ENCODE measurements at regions of chr19 and their contacts with region 1.

Region 1: GRCh38 chr19:52922841-52923777 is at the start of gene ZNF888:
- DNase-seq: peak; percentile 84 to 88
- ATAC-seq: peak; percentile 100
- H3K4me3 ChIP-seq: peak within 1 kb of the TSS; percentile 76
- H3K4me3 Mint-ChIP-seq: peak within 1 kb of the TSS; percentile 89
- H3K27ac ChIP-seq: peak within 1 kb of the TSS; percentile 69
- H3K27ac Mint-ChIP-seq: peak within 1 kb of the TSS; percentile 57 to 80
- H3K4me1 ChIP-seq: peaks cover 19% of the 10 kb centered on the region
- H3K4me1 Mint-ChIP-seq: peaks cover 16 to 29% of the 10 kb centered on the region in 2 donors
- H3K27me3 ChIP-seq: no peaks in the 10 kb centered on the region
- H3K27me3 Mint-ChIP-seq: no peaks in the 10 kb centered on the region
- CTCF ChIP-seq: no peak
- total RNA-seq, gene ZNF888: 5.1 to 13.5 (median 8.0) TPM

Region 2: DNA sequence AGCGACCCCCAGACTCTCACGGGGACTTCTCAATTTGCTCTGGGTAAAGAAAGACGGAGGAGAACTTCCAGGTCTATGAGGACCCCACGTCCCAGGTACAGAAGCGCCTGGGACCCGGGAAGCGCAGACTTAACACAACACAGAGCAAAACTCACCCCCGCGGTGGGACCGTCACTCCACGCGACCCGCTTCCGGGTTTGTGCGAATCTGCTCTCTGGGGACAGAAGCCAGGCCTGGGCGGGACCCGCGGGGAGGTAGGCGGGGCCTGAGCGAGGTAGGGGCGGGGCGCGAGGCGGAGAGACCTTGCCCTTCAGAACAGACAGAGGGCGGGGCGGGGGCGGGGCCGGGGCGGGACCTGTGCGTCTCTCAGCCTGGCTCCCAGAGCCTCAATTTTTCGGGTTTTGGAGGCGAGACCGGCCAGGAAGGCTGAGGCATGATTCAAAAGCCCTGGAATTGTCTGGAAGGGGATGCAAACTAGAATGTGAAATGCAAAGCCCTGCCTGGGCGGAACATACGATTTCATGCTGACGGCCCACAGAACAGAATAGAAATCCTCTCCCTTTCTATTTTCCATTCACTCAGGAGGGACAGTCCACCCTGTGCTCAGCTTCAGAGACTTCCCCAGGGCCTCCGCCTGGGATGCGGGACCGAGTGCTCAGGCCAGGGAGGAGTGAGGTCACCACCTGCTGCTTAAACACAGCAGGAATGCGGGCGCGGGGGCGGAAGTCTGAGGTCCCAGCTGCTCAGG is 19.5 kb after region 1 on chr19:
- intact Hi-C with region 1: loop called (anchors 1 kb)
- DNase-seq: peak; percentile 94 to 100
- ATAC-seq: peak; percentile 99 to 100 (median 99)
- H3K4me3 ChIP-seq: peak overlapping the region; percentile 74
- H3K4me3 Mint-ChIP-seq: peak overlapping the region; percentile 97
- H3K27ac ChIP-seq: peak overlapping the region; percentile 75
- H3K27ac Mint-ChIP-seq: peak overlapping the region; percentile 87 to 91
- H3K4me1 ChIP-seq: peaks cover 21% of the 10 kb centered on the region
- H3K4me1 Mint-ChIP-seq: peaks cover 24 to 29% of the 10 kb centered on the region in 2 donors
- H3K27me3 ChIP-seq: no peaks in the 10 kb centered on the region
- H3K27me3 Mint-ChIP-seq: no peaks in the 10 kb centered on the region
- CTCF ChIP-seq: no peak

Region 3: GRCh38 chr19:52962394-52963246 is 39.5 kb after region 1 on chr19 and contains the start of gene ZNF816:
- intact Hi-C with region 1: no loop called
- DNase-seq: peak; percentile 97 to 99
- ATAC-seq: peak; percentile 99 to 100 (median 99)
- H3K4me3 ChIP-seq: peak within 1 kb of the TSS; percentile 68
- H3K4me3 Mint-ChIP-seq: peak within 1 kb of the TSS; percentile 93
- H3K27ac ChIP-seq: peak within 1 kb of the TSS; percentile 66
- H3K27ac Mint-ChIP-seq: peak within 1 kb of the TSS; percentile 89 to 93
- H3K4me1 ChIP-seq: peaks cover 14% of the 10 kb centered on the region
- H3K4me1 Mint-ChIP-seq: peaks cover 34% of the 10 kb centered on the region in 2 donors
- H3K27me3 ChIP-seq: no peaks in the 10 kb centered on the region
- H3K27me3 Mint-ChIP-seq: no peaks in the 10 kb centered on the region
- CTCF ChIP-seq: no peak
- total RNA-seq, gene ZNF816: 4.1 to 11.3 (median 7.7) TPM

Measured in natural killer cell (primary cell).